Common myeloid progenitor, CD34-positive (primary cell): ENCODE measurements at regions of chr5 and their contacts with region 1.

Region 1: DNA sequence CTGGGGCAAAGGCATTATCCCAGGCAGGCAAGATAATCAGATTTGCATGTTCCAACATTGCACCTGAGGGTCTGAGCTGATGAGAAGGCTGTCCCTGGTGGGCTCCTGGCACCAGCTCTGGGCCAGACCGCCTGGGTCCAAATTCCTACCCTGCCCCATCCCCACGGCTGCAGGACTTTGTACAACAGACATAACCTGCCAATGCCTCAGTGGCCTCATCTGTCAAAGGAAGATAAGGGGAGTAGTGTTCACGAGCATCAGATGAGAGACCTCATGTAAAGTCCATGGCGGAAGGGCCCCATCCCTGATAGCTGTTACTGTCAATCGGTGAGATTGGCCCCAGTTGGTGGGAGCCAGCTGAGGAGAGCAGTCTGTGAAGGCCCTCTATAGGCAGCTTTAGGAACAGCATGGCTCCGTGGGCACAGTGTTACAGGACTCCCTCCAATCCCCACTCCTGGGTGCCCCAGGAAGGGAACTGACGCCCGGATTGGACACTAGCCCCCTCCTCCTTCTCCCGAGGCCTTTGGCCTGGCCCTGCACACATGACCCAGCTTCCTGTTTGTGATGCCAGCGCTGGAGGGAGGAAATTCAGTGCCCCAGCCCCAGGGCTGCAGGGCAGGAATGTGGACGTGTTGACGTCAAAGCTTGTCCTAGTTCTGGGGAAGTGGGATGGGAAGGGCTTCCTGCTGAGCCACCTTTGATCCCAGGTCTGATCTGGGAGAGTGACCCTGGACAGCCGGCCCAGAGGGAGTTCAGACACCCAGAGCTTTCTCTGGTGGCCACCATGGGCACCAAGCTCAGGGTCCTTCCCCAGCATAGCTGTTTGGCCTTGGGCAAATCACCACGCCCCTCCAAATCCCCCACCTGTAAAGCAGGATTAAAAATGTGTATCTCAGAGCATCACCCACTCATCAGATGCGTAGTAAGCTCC is 56.2 kb downstream of the DUSP1 start:
- DNase-seq: peak; percentile 64 to 75 (median 66)
- H3K4me3 ChIP-seq: no peak overlapping the region
- H3K27ac ChIP-seq: no peak overlapping the region
- H3K4me1 ChIP-seq: peaks cover 0 to 15% (median 5%) of the 10 kb centered on the region in 4 experiments
- H3K27me3 ChIP-seq: no peaks in the 10 kb centered on the region

Region 2: DNA sequence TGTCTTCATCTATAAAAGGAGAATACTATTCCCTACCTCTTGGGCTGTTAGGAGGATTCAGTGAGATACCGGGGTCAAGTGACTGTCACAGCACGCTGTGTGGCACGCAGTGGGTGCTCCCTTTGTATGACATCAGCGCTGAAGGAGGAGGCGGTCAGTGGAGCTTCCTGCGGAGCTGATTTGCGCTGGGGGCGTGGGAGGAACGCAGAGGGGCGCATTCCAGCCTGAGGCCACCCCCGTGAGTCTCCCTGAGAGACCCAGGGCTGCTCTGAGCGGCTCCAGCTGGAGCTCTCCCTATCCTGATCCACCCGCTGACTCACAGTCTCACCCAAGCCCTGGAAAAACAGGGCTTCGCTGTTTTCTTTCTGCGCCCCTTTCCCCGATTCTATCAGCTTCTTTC is 98.0 kb before region 1 on chr5:
- CTCF ChIA-PET with region 1: no interaction called
- POLR2A ChIA-PET with region 1: no interaction called
- DNase-seq: no peak
- H3K4me3 ChIP-seq: no peak overlapping the region
- H3K27ac ChIP-seq: no peak overlapping the region
- H3K4me1 ChIP-seq: peaks cover 0 to 11% (median 0%) of the 10 kb centered on the region in 4 experiments
- H3K27me3 ChIP-seq: no peaks in the 10 kb centered on the region

Region 3: GRCh38 chr5:172727551-172727950 is 12.8 kb after region 1 on chr5:
- CTCF ChIA-PET with region 1: interaction called, 13 read pairs
- POLR2A ChIA-PET with region 1: no interaction called
- DNase-seq: no peak
- H3K4me3 ChIP-seq: no peak overlapping the region
- H3K27ac ChIP-seq: no peak overlapping the region
- H3K4me1 ChIP-seq: no peaks in the 10 kb centered on the region
- H3K27me3 ChIP-seq: peaks cover 0 to 1% (median 0%) of the 10 kb centered on the region in 5 experiments

Region 4: GRCh38 chr5:172897481-172898217 is 182.9 kb after region 1 on chr5:
- CTCF ChIA-PET with region 1: interaction called, 14 read pairs
- POLR2A ChIA-PET with region 1: no interaction called
- DNase-seq: peak in 2 of 3 donors; percentile 72 to 83
- H3K4me3 ChIP-seq: peak overlapping the region in 2 of 7 experiments; percentile 16 to 63
- H3K27ac ChIP-seq: peak overlapping the region; percentile 33 to 60
- H3K4me1 ChIP-seq: peaks cover 0 to 37% (median 16%) of the 10 kb centered on the region in 4 experiments
- H3K27me3 ChIP-seq: no peaks in the 10 kb centered on the region

Region 5: GRCh38 chr5:172906129-172906835 is 191.5 kb after region 1 on chr5:
- CTCF ChIA-PET with region 1: interaction called, 15 read pairs
- POLR2A ChIA-PET with region 1: no interaction called
- DNase-seq: no peak
- H3K4me3 ChIP-seq: no peak overlapping the region
- H3K27ac ChIP-seq: peak overlapping the region in 1 of 2 experiments; percentile 43
- H3K4me1 ChIP-seq: peaks cover 0 to 23% (median 8%) of the 10 kb centered on the region in 4 experiments
- H3K27me3 ChIP-seq: no peaks in the 10 kb centered on the region